ENCODE measurements at regions of chr4 and their contacts with region 1.

Region 1: DNA sequence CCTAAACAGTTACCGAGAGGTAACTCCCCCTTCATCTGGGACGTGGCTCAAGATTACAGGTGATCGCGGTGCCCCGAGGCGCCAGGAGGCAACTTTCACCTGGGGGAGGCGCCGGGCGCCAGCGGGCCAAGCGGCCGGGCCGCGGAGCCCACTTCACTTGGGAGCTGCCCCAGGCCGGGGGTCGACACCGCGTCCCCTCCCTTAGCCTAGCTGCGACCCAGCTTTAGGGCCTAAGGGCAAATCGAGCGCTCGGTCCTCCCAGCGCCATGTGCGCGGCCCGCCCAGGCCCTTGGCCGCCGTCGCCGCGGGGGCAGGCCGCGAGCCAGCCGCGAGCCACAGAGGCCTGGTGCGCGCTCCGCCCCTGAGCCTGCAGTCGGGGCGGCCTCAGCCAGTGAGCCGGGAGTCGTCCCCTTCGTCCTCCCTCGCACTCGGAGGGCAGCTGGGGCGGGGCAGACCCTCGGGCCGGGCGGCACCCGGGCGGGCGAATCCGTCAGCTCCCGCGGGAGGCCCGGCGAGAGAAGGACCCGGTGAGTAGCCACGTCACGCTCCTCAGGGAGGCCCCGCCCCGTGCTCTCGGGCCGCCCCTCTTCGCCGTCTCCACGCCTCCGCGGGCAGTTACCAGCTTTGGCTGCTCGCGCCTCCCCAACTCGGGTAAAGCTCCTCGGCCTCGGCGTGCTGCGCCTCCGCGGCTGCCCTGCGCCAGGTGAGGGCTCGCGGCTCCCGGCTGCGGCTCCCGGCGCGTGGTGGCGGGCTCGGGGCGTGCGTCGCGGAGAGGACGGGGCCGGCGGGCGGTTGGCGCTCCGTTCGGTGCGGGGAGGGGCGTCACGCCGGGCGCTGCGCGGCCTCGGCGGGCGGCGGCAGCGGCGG is at the start of gene LARP1B:
- DNase-seq: peak; percentile 97
- H3K4me3 ChIP-seq: peak within 1 kb of the TSS; percentile 86
- H3K4me3 Mint-ChIP-seq: peak within 1 kb of the TSS; percentile 71
- H3K27ac Mint-ChIP-seq: peak within 1 kb of the TSS; percentile 93
- H3K4me1 ChIP-seq: no peaks in the 10 kb centered on the region; the same call in 1 of the 2 replicates
- H3K4me1 Mint-ChIP-seq: peaks cover 5% of the 10 kb centered on the region
- H3K27me3 ChIP-seq: no peaks in the 10 kb centered on the region
- H3K27me3 Mint-ChIP-seq: no peaks in the 10 kb centered on the region
- CTCF ChIP-seq: no peak
- total RNA-seq, gene LARP1B: 23.6 and 25.0 TPM in 2 replicates

Region 2: DNA sequence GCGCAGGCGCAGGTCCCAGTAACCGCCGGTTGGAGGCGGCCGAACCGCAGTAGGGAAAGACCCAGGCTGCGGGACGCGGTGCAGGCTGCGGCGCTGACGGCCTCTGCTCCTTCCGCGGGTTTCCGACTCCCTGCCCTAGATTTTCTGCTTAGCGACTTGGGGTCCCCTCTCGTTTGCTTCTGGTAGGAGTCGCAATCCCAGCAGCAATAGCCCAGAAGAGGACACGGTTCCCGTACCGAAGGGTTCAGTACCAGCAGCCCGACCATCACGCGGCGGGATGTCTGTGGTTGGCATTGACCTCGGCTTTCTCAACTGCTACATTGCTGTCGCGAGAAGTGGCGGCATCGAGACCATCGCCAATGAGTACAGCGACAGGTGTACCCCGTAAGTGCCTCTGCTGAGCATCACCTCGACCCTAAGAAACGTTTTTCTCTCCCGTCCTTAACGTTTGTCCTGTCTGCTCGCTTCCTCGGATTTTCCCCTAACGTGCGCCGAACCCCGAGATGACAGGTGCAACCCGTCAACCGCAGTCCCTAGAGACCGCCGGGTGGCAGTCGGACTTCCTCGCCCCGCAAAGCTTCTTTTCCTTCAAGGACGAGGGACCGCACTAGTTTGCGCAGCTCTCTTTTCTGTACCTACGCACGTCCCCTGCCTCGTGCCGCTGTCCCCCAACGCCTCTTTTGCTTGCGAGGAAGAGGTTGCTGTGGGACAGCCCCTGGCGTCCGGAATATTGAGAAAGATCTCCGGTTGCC is 278.5 kb before region 1 on chr4 and contains the start of gene HSPA4L:
- CTCF ChIA-PET with region 1: no interaction called
- POLR2A ChIA-PET with region 1: interaction called, 10 read pairs
- intact Hi-C with region 1: loop called (anchors 5 kb)
- DNase-seq: peak; percentile 36 to 37
- H3K4me3 ChIP-seq: peak within 1 kb of the TSS; percentile 59
- H3K4me3 Mint-ChIP-seq: peak within 1 kb of the TSS; percentile 97
- H3K27ac Mint-ChIP-seq: peak within 1 kb of the TSS; percentile 90
- H3K4me1 ChIP-seq: peaks cover 13% of the 10 kb centered on the region; the same call in 1 of the 2 replicates
- H3K4me1 Mint-ChIP-seq: peaks cover 7% of the 10 kb centered on the region
- H3K27me3 ChIP-seq: no peaks in the 10 kb centered on the region
- H3K27me3 Mint-ChIP-seq: peaks cover 3% of the 10 kb centered on the region
- CTCF ChIP-seq: peak in 1 of 2 experiments; percentile 23
- total RNA-seq, gene HSPA4L: 3.3 and 3.6 TPM in 2 replicates

Region 3: DNA sequence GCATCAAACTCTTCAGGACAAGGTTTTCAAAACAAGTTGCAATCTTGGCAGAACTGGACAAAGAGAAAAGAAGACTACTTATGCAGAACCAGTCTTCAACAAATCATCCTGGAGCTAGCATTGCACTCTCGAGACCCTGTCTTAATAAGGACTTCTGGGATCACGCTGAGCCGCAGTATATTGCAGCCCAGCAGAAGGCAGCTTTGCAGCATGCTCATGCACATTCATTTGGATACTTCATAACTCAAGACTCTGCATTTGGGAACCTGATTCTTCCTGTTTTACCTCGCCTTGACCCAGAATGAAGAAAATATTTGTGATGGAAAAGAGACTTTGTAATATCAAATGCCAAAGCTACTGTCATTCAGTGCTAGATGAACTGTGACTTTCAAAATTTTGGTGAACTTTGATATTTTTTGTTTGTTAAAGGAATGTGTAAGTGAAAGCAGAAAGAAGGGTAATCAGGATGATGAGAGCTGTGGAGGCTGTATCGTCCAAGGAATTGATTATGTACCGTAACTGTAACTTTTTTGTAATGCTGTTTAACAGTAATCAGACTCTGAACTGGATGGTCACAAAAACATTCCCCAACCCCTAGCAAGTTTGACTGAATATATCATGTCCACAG is 251.6 kb before region 1 on chr4:
- CTCF ChIA-PET with region 1: no interaction called
- POLR2A ChIA-PET with region 1: no interaction called
- intact Hi-C with region 1: loop called (anchors 10 kb)
- DNase-seq: peak in 1 of 2 experiments; percentile 3
- H3K4me3 ChIP-seq: no peak overlapping the region
- H3K4me3 Mint-ChIP-seq: no peak overlapping the region
- H3K27ac Mint-ChIP-seq: no peak overlapping the region
- H3K4me1 ChIP-seq: no peaks in the 10 kb centered on the region
- H3K4me1 Mint-ChIP-seq: no peaks in the 10 kb centered on the region
- H3K27me3 ChIP-seq: no peaks in the 10 kb centered on the region
- H3K27me3 Mint-ChIP-seq: no peaks in the 10 kb centered on the region
- CTCF ChIP-seq: peak in 1 of 2 experiments; percentile 20

Region 4: GRCh38 chr4:127880764-127881562 is 180.0 kb before region 1 on chr4 and contains the start of gene PLK4:
- CTCF ChIA-PET with region 1: no interaction called
- POLR2A ChIA-PET with region 1: interaction called, 8 read pairs
- intact Hi-C with region 1: loop called (anchors 2 kb)
- DNase-seq: peak; percentile 96
- H3K4me3 ChIP-seq: peak within 1 kb of the TSS; percentile 97
- H3K4me3 Mint-ChIP-seq: peak within 1 kb of the TSS; percentile 93
- H3K27ac Mint-ChIP-seq: peak within 1 kb of the TSS; percentile 99
- H3K4me1 ChIP-seq: no peaks in the 10 kb centered on the region; the same call in none of the 2 replicates
- H3K4me1 Mint-ChIP-seq: no peaks in the 10 kb centered on the region
- H3K27me3 ChIP-seq: no peaks in the 10 kb centered on the region
- H3K27me3 Mint-ChIP-seq: no peaks in the 10 kb centered on the region
- CTCF ChIP-seq: no peak
- total RNA-seq, gene PLK4: 28.2 and 31.1 TPM in 2 replicates

Region 5: GRCh38 chr4:127965062-127965802 is 95.7 kb before region 1 on chr4 and contains the starts of genes ABHD18 and MFSD8:
- CTCF ChIA-PET with region 1: interaction called, 11 read pairs
- POLR2A ChIA-PET with region 1: interaction called, 20 read pairs
- intact Hi-C with region 1: loop called (anchors 2 kb)
- DNase-seq: peak; percentile 99
- H3K4me3 ChIP-seq: peak within 1 kb of the TSS; percentile 66
- H3K4me3 Mint-ChIP-seq: peak within 1 kb of the TSS; percentile 97
- H3K27ac Mint-ChIP-seq: peak within 1 kb of the TSS; percentile 97
- H3K4me1 ChIP-seq: peaks cover 4% of the 10 kb centered on the region; the same call in 1 of the 2 replicates
- H3K4me1 Mint-ChIP-seq: no peaks in the 10 kb centered on the region
- H3K27me3 ChIP-seq: no peaks in the 10 kb centered on the region
- H3K27me3 Mint-ChIP-seq: no peaks in the 10 kb centered on the region
- CTCF ChIP-seq: peak; percentile 34 to 44
- total RNA-seq, gene ABHD18: 14.9 and 15.1 TPM in 2 replicates
- total RNA-seq, gene MFSD8: 24.3 and 27.9 TPM in 2 replicates

Region 6: GRCh38 chr4:129093191-129093920 is 1032.4 kb after region 1 on chr4 and contains the start of gene SCLT1:
- CTCF ChIA-PET with region 1: no interaction called
- POLR2A ChIA-PET with region 1: no interaction called
- intact Hi-C with region 1: loop called (anchors 5 kb)
- DNase-seq: peak; percentile 97
- H3K4me3 ChIP-seq: peak within 1 kb of the TSS; percentile 80
- H3K4me3 Mint-ChIP-seq: no peak within 1 kb of the TSS
- H3K27ac Mint-ChIP-seq: no peak within 1 kb of the TSS
- H3K4me1 ChIP-seq: peaks cover 11% of the 10 kb centered on the region; the same call in 1 of the 2 replicates
- H3K4me1 Mint-ChIP-seq: peaks cover 8% of the 10 kb centered on the region
- H3K27me3 ChIP-seq: no peaks in the 10 kb centered on the region
- H3K27me3 Mint-ChIP-seq: no peaks in the 10 kb centered on the region
- CTCF ChIP-seq: no peak
- total RNA-seq, gene SCLT1: 9.3 and 10.9 TPM in 2 replicates

Measured in Caco-2 (cell line).